Panc1 (cell line): ENCODE measurements at regions of chr7 and their contacts with region 1.

Region 1: GRCh38 chr7:100210805-100211204 is 8.9 kb upstream of the PVRIG start:
- DNase-seq: no peak
- ATAC-seq: no peak
- H3K4me3 ChIP-seq: no peak overlapping the region
- H3K27ac ChIP-seq: no peak overlapping the region
- H3K4me1 ChIP-seq: no peaks in the 10 kb centered on the region
- H3K27me3 ChIP-seq: no peaks in the 10 kb centered on the region; the same call in none of the 2 replicates
- CTCF ChIP-seq: no peak

Region 2: DNA sequence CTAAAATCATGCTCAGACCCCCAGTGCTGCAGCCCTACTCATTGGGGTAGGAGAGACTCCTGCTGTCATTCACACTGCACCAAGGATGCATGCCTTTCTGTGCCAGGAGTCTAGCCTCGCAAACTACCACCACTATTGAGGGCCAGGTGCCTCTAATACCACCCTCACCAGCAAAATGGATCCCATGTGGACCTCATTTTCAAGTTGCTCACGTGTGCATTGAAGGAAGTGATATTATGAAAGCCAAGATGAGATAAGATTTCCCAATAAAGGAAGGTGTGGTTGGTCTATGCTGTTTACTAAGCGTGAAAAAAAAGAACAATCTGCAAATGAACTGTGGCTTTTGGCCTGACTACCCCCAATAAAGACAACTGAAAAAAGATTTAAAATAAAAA is 69.3 kb before region 1 on chr7:
- CTCF ChIA-PET with region 1: no interaction called
- POLR2A ChIA-PET with region 1: no interaction called
- in situ Hi-C with region 1: no loop called
- intact Hi-C with region 1: no loop called
- DNase-seq: no peak
- ATAC-seq: no peak
- H3K4me3 ChIP-seq: no peak overlapping the region
- H3K27ac ChIP-seq: no peak overlapping the region
- H3K4me1 ChIP-seq: no peaks in the 10 kb centered on the region
- H3K27me3 ChIP-seq: no peaks in the 10 kb centered on the region
- CTCF ChIP-seq: no peak

Region 3: DNA sequence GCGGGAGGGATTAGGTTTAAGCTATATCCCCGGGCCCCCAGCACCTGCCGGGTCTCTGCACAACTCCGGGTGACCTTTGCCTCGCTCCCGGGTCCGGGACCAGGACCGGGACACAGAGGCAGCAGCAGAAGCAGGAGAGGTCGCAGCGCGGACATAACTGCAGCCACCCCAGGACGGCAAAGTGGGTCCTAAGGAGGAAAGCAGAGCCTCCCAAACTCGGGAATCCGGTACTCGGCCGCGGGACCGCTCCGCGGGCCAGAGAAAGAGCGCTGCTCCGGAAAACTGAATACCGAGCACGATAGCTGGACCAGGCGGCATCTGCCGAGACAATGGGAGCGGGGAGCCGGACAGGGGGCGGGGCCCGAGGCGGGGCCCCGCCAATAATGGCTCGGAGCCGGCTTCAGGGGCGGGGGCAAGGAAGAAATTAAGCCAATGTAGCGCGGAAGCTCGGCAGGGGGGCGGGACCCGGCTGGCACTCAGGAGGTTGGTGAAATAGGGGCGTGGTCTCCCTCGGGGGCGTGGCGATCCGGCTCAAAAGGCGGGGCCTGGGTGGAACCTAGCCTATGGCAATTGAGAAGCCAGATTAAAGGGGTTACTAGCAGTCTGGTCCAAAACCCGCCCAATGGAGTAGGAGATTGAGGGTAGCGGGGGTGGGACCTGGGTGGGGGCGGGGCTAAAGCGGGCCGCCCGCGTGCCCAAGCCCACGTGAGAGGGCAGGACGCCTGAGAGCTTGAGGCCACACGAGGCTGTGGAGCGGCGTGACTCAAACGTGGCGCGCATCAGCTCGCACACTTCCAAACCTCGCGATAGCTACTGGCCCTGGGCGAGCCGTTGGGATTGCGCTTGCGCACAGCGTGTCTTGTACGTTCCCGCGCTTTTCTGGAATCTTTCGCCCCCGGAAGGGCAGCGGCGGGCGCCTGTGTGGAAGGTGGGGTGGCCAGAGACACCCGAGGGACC is 33.5 kb before region 1 on chr7 and contains the starts of genes GPC2 and STAG3:
- CTCF ChIA-PET with region 1: interaction called, 10 read pairs
- POLR2A ChIA-PET with region 1: no interaction called
- in situ Hi-C with region 1: no loop called
- intact Hi-C with region 1: no loop called
- DNase-seq: peak; percentile 80
- ATAC-seq: peak; percentile 93
- H3K4me3 ChIP-seq: peak within 1 kb of the TSS; percentile 67 to 87
- H3K27ac ChIP-seq: peak within 1 kb of the TSS; percentile 77
- H3K4me1 ChIP-seq: 0 out of 2 replicates have a peak, but pooled peaks cover 3% of the 10 kb centered on the region
- H3K27me3 ChIP-seq: no peaks in the 10 kb centered on the region
- CTCF ChIP-seq: no peak
- total RNA-seq, gene GPC2: 7.9 TPM
- total RNA-seq, gene STAG3: 1.7 TPM